BJ (cell line): ENCODE measurements at regions of chr3 and their contacts with region 1.

Region 1: DNA sequence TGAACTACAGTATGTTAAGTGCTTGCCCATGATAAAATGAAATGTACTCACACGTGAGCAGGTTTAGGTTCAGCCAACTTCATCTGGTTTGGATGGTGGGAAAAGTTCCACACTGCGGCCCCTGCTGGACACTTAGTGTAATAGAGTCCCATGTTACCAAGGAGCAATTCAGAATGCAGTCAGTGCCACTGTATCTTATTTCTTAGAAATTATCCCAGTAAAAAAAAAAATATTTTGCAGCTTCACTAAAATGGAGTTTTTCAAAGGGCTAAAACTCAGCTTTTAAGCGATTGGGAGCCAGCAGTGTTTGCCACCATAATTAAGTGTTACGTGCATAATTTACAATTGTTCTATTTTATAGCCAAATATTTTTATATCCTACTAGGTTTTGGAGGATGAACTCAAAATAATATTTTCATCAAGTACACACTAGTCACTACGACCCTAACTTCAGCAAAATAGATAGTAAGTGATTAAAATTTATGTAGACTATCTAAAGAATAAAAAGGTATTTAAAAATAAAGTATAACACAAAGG is 371.7 kb upstream of the GBE1 start:
- DNase-seq: peak; percentile 3
- H3K4me3 ChIP-seq: no peak overlapping the region
- H3K27me3 ChIP-seq: no peaks in the 10 kb centered on the region
- CTCF ChIP-seq: peak; percentile 86

Region 2: DNA sequence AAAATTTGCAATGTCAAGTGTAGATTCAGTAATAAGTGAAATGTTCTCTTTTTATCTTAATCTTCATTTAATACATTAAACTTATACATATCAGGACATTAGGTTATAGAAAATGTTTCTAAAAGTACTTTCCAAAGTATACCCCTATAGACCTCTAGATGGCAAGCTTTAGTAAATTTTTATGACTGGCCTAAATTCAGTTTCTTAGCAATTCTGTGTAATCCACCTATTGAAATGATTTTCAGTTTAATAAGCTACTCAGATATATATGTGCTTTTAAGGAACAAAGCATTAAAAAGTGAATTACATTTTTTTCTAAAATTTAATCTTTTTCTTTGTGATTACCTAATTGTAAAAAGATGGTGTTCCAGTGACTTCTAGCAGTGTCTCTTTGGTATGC is 713.9 kb before region 1 on chr3:
- CTCF ChIA-PET with region 1: interaction called, 18 read pairs
- POLR2A ChIA-PET with region 1: no interaction called
- DNase-seq: no peak
- H3K4me3 ChIP-seq: no peak overlapping the region
- H3K27me3 ChIP-seq: no peaks in the 10 kb centered on the region
- CTCF ChIP-seq: peak; percentile 54; the same call in 1 of the 2 replicates